ENCODE measurements at regions of chr1 and their contacts with region 1.

Region 1: GRCh38 chr1:207084701-207085180 is 3.9 kb upstream of the C4BPB start:
- DNase-seq: peak; percentile 84 to 87
- H3K4me3 ChIP-seq: no peak overlapping the region
- H3K4me3 Mint-ChIP-seq: peak overlapping the region; percentile 46
- H3K27ac Mint-ChIP-seq: peak overlapping the region; percentile 62
- H3K4me1 ChIP-seq: peaks cover 59% of the 10 kb centered on the region
- H3K4me1 Mint-ChIP-seq: peaks cover 56% of the 10 kb centered on the region
- H3K27me3 ChIP-seq: no peaks in the 10 kb centered on the region
- H3K27me3 Mint-ChIP-seq: no peaks in the 10 kb centered on the region
- CTCF ChIP-seq: peak; percentile 77 to 80

Region 2: DNA sequence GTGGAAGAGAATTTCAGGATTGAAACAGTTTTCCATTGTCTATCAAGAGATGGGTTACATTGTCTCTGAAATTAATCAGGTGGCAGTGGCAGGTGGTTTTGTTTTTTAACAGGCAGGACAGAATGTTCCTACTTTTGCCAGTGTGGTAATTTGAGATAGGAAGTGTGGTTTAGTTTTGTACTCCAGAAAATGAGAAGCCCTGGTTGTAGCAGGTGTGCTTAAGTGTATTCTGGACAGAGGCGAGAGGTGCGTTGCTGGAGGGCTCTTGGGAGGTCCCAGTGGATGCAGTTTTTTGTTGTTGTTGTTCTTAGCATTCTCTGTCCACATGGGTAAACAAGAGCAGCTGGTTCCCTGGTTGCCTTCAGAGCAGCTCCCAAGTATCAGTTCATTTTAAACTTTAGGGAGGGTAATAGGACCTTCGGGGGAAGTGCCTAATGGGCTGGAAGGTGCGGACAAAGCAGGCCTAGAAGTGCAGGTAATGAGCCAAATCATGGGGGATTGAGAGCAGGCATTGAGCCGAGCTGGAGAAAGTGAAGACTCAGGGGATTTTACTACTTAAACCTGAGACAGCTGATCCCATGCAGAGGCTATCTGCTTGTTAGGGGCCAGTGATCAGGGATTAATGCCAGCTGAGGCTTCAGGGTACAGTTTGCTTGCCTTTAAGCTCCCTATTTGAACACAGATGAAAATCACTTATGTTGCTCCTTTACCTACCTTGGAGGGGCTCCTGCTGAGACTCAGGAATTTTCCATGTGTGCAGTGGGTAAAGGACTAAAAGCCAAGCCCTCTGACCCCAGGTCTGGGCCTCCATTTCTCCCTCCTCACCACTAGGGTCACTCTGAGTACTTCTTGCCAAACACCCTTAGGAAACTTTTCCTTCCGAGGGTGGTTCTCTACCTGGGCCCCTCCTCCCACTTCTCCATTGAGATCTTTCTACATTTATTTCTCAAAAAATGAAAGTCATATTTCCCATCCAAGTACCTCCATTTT is 25.6 kb before region 1 on chr1:
- CTCF ChIA-PET with region 1: no interaction called
- POLR2A ChIA-PET with region 1: no interaction called
- intact Hi-C with region 1: no loop called
- DNase-seq: peak in 1 of 2 experiments; percentile 19
- H3K4me3 ChIP-seq: no peak overlapping the region
- H3K4me3 Mint-ChIP-seq: no peak overlapping the region
- H3K27ac Mint-ChIP-seq: no peak overlapping the region
- H3K4me1 ChIP-seq: no peaks in the 10 kb centered on the region
- H3K4me1 Mint-ChIP-seq: peaks cover 8% of the 10 kb centered on the region
- H3K27me3 ChIP-seq: no peaks in the 10 kb centered on the region
- H3K27me3 Mint-ChIP-seq: no peaks in the 10 kb centered on the region
- CTCF ChIP-seq: peak in 1 of 2 experiments; percentile 31

Region 3: DNA sequence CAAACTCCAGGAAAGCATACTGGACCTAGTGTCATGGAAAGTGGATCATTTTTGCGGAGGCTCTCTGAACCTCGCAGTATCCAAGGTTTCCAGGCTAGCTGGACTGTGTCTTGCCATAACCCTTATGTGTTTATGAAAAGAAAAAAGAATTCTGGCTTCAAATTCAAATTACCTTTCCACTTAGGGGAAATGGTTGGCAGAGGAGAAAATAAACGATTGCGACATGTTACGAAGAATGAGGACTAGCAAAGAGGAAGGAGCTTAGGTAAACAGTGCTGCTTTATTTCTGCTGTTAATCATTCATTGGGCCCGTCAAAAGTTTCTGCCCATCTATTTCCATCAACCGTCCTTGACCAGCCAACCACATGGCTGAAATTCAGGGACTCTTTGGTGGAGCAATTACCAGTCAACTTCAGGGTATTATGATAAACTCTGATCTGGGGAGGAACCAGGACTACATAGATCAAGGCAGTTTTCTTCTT is 19.2 kb after region 1 on chr1 and contains the start of gene C4BPA:
- CTCF ChIA-PET with region 1: interaction called, 3 read pairs
- POLR2A ChIA-PET with region 1: no interaction called
- intact Hi-C with region 1: loop called (anchors 2 kb)
- DNase-seq: peak; percentile 46 to 54
- H3K4me3 ChIP-seq: no peak within 1 kb of the TSS
- H3K4me3 Mint-ChIP-seq: peak within 1 kb of the TSS; percentile 42
- H3K27ac Mint-ChIP-seq: peak within 1 kb of the TSS; percentile 34
- H3K4me1 ChIP-seq: peaks cover 27% of the 10 kb centered on the region
- H3K4me1 Mint-ChIP-seq: peaks cover 30% of the 10 kb centered on the region
- H3K27me3 ChIP-seq: no peaks in the 10 kb centered on the region
- H3K27me3 Mint-ChIP-seq: no peaks in the 10 kb centered on the region
- CTCF ChIP-seq: no peak
- total RNA-seq, gene C4BPA: 10.6 and 12.7 TPM in 2 replicates

Region 4: GRCh38 chr1:207240325-207241095 is 155.8 kb after region 1 on chr1:
- CTCF ChIA-PET with region 1: no interaction called
- POLR2A ChIA-PET with region 1: interaction called, 7 read pairs
- intact Hi-C with region 1: loop called (anchors 1 kb)
- DNase-seq: peak; percentile 61 to 67
- H3K4me3 ChIP-seq: no peak overlapping the region; the same call in 1 of the 2 replicates
- H3K4me3 Mint-ChIP-seq: peak overlapping the region; percentile 68
- H3K27ac Mint-ChIP-seq: peak overlapping the region; percentile 98
- H3K4me1 ChIP-seq: peaks cover 62% of the 10 kb centered on the region
- H3K4me1 Mint-ChIP-seq: peaks cover 59% of the 10 kb centered on the region
- H3K27me3 ChIP-seq: no peaks in the 10 kb centered on the region
- H3K27me3 Mint-ChIP-seq: no peaks in the 10 kb centered on the region
- CTCF ChIP-seq: no peak

Region 5: GRCh38 chr1:207336559-207337467 is 252.1 kb after region 1 on chr1:
- CTCF ChIA-PET with region 1: interaction called, 3 read pairs
- POLR2A ChIA-PET with region 1: no interaction called
- intact Hi-C with region 1: loop called (anchors 5 kb)
- DNase-seq: no peak
- H3K4me3 ChIP-seq: no peak overlapping the region
- H3K4me3 Mint-ChIP-seq: no peak overlapping the region
- H3K27ac Mint-ChIP-seq: peak overlapping the region; percentile 68
- H3K4me1 ChIP-seq: no peaks in the 10 kb centered on the region
- H3K4me1 Mint-ChIP-seq: peaks cover 23% of the 10 kb centered on the region
- H3K27me3 ChIP-seq: no peaks in the 10 kb centered on the region
- H3K27me3 Mint-ChIP-seq: no peaks in the 10 kb centered on the region
- CTCF ChIP-seq: no peak

Region 6: DNA sequence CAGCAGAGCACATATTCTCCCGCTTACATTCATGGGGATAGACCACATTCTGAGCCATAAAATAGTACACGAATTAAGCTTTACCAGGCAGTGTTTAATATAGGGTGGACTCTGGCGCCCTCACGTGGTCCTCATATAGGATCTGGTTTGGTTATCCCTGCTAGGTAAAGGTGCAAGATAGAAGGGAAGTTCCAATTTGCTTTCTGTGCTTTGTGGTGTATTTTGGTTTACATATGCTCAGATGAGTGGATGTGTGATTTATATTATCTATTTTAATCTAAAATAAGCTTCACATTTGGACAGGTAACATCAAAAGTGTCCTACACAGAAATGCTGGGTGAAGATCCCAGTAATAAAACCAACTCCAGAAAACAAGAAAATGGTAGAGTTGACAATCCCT is 414.8 kb after region 1 on chr1:
- CTCF ChIA-PET with region 1: interaction called, 3 read pairs
- POLR2A ChIA-PET with region 1: no interaction called
- intact Hi-C with region 1: loop called (anchors 1 kb)
- DNase-seq: peak; percentile 56 to 57
- H3K4me3 ChIP-seq: no peak overlapping the region
- H3K4me3 Mint-ChIP-seq: no peak overlapping the region
- H3K27ac Mint-ChIP-seq: no peak overlapping the region
- H3K4me1 ChIP-seq: no peaks in the 10 kb centered on the region
- H3K4me1 Mint-ChIP-seq: no peaks in the 10 kb centered on the region
- H3K27me3 ChIP-seq: no peaks in the 10 kb centered on the region; the same call in 1 of the 2 replicates
- H3K27me3 Mint-ChIP-seq: peaks cover 26% of the 10 kb centered on the region
- CTCF ChIP-seq: peak; percentile 69 to 70

Measured in Caco-2 (cell line).